ENCODE measurements at regions of chr3 and their contacts with region 1.

Region 1: DNA sequence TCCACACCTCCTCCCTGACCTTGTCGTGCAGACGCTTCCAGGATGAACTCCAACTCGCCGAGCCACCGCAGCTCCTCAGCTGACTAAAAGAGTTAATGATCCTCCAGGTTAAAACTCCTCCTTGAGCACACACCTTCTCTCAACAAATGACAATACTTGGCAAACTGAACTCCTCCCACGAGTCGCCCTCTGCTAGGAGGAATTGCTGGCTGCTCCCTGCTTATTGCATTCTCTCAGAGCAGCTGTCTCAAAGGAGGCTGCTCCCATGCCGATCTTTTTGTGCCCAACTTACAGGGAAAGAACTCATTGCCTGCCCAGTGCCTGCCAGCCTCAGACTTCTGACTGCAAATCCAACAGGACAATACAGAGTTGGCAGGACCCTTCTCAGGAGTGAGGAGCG is at the start of gene ATP13A4:
- DNase-seq: peak; percentile 84
- H3K4me3 Mint-ChIP-seq: peak within 1 kb of the TSS; percentile 81
- H3K27ac Mint-ChIP-seq: peak within 1 kb of the TSS; percentile 91
- H3K4me1 Mint-ChIP-seq: peaks cover 72% of the 10 kb centered on the region
- H3K27me3 Mint-ChIP-seq: no peaks in the 10 kb centered on the region
- CTCF ChIP-seq: no peak
- total RNA-seq, gene ATP13A4: 24.6 and 31.9 TPM in 2 replicates

Region 2: GRCh38 chr3:192879336-192880106 is 675.3 kb before region 1 on chr3:
- CTCF ChIA-PET with region 1: no interaction called
- intact Hi-C with region 1: loop called (anchors 10 kb)
- DNase-seq: peak; percentile 83
- H3K4me3 Mint-ChIP-seq: peak overlapping the region; percentile 27
- H3K27ac Mint-ChIP-seq: peak overlapping the region; percentile 66
- H3K4me1 Mint-ChIP-seq: peaks cover 31% of the 10 kb centered on the region
- H3K27me3 Mint-ChIP-seq: no peaks in the 10 kb centered on the region
- CTCF ChIP-seq: no peak

Region 3: DNA sequence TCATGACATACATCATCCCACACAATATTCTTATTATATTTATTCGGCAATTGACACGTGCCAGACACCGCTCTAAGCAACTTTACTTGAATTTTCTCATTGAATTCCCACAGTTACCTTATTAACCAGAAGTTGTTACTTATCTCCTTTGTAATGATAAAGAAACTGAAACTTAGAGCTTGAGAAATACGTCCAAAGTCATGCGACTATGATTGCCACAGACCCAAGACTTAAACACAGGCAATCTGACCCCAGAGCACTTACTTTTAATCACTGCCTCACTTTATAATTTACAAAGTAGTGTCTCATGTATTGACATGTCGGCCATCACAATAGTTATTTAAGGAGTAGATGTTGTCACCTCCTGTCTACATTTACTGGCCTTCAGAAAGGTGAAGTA is 64.9 kb before region 1 on chr3:
- CTCF ChIA-PET with region 1: interaction called, 3 read pairs
- intact Hi-C with region 1: loop called (anchors 2 kb)
- DNase-seq: no peak
- H3K4me3 Mint-ChIP-seq: peak overlapping the region; percentile 16
- H3K27ac Mint-ChIP-seq: peak overlapping the region; percentile 60
- H3K4me1 Mint-ChIP-seq: peaks cover 27% of the 10 kb centered on the region
- H3K27me3 Mint-ChIP-seq: no peaks in the 10 kb centered on the region
- CTCF ChIP-seq: no peak

Region 4: DNA sequence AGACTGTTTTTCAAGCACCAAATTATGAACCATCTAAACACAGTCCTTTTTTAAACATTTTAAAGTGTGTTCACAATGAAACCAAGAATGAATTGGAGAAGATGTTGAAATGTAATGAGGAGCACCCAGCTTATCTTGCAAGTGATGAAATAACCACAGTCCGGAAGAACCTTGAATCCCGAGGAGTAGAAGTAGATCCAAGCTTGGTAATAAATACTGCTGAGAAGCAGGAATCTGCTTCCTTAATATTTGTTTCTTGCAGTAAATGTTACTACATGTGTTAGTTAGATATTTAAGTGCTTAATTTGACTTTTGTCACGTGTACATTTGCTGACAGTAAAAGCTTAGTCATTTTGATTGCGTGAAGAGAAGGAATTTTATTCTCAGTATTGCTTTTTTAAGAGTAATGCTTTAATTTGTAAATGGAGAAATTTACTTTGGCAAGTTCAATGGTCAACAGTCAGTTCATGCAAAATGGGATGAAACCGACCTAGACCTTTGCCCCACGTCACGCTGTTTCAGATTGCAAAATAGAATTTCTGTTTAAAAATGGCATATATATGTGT is 108.0 kb after region 1 on chr3:
- CTCF ChIA-PET with region 1: no interaction called
- intact Hi-C with region 1: no loop called
- DNase-seq: no peak
- H3K4me3 Mint-ChIP-seq: no peak overlapping the region
- H3K27ac Mint-ChIP-seq: no peak overlapping the region
- H3K4me1 Mint-ChIP-seq: no peaks in the 10 kb centered on the region
- H3K27me3 Mint-ChIP-seq: no peaks in the 10 kb centered on the region
- CTCF ChIP-seq: no peak

Region 5: DNA sequence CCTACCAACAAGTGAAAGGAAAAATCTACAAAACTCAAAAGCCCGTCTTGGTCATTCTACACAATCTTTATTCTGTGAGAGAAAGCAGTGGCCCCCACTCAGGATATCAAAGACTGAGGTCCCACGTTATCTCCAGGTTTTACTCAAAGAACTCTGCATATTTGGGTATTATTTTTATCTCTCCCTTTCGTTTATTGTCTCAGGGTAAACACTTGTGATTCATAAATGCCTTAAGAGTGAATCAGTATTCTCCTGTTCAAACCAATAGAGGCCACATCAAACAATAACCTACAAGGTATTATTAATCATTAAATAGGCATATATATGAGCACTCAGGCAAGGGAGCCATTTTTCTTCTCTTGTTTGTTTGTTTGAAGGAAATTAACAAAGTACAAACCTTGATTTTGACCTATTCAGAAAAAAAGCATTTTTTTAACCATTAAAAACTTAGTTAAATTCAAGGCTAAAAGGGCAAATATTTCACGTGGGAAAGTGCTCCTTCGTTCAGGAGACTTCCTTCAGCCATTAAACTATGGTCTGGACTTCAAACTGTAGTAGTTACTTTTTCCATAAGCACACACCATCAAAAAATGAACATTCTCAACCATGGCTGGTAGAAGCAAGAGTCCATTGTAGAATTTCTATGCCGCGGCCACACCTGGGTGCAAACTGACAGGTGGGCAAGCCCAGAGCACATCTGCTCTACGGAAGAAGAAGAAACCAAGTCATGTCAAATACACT is 567.2 kb after region 1 on chr3:
- CTCF ChIA-PET with region 1: no interaction called
- intact Hi-C with region 1: no loop called
- DNase-seq: no peak
- H3K4me3 Mint-ChIP-seq: no peak overlapping the region
- H3K27ac Mint-ChIP-seq: peak overlapping the region; percentile 55
- H3K4me1 Mint-ChIP-seq: peaks cover 58% of the 10 kb centered on the region
- H3K27me3 Mint-ChIP-seq: peaks cover 37% of the 10 kb centered on the region
- CTCF ChIP-seq: no peak